ENCODE measurements at regions of chr21 and their contacts with region 1.

Region 1: GRCh38 chr21:27741736-27742135 is 774.8 kb upstream of the ADAMTS5 start:
- DNase-seq: no peak
- H3K4me3 ChIP-seq: no peak overlapping the region
- H3K27ac ChIP-seq: no peak overlapping the region
- H3K4me1 ChIP-seq: no peaks in the 10 kb centered on the region
- H3K27me3 ChIP-seq: no peaks in the 10 kb centered on the region
- CTCF ChIP-seq: no peak
- POLR2A ChIP-seq: no peak

Region 2: DNA sequence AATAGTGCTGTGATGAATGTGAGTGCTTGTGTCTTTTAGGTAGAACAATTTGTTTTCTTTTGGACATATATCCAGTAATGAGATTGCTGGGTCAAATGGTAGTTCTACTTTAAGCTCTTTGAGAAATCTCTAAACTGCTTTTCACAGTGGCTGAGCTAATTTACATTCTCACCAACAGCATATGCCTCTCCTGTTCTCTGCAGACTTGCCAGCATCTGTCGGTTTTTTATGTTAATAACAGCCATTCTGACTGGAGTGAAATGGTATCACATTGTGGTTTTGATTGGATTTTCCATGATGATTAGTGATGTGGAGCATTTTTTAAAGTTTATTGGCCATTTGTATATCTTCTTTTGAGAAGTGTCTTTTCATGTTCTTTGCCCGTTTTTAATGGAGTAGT is 127.5 kb before region 1 on chr21:
- intact Hi-C with region 1: no loop called
- DNase-seq: no peak
- H3K4me3 ChIP-seq: no peak overlapping the region
- H3K27ac ChIP-seq: no peak overlapping the region
- H3K4me1 ChIP-seq: no peaks in the 10 kb centered on the region
- H3K27me3 ChIP-seq: no peaks in the 10 kb centered on the region
- CTCF ChIP-seq: no peak
- POLR2A ChIP-seq: no peak

Region 3: GRCh38 chr21:27681841-27682240 is 59.9 kb before region 1 on chr21:
- intact Hi-C with region 1: no loop called
- DNase-seq: no peak
- H3K4me3 ChIP-seq: no peak overlapping the region
- H3K27ac ChIP-seq: no peak overlapping the region
- H3K4me1 ChIP-seq: no peaks in the 10 kb centered on the region
- H3K27me3 ChIP-seq: no peaks in the 10 kb centered on the region
- CTCF ChIP-seq: no peak
- POLR2A ChIP-seq: no peak

Region 4: GRCh38 chr21:28375708-28376385 is 634.1 kb after region 1 on chr21:
- intact Hi-C with region 1: loop called (anchors 10 kb)
- DNase-seq: no peak
- H3K4me3 ChIP-seq: no peak overlapping the region
- H3K27ac ChIP-seq: no peak overlapping the region
- H3K4me1 ChIP-seq: no peaks in the 10 kb centered on the region
- H3K27me3 ChIP-seq: no peaks in the 10 kb centered on the region
- CTCF ChIP-seq: no peak
- POLR2A ChIP-seq: no peak

Measured in testis (tissue), 5 donors.